ENCODE measurements at regions of chr2 and their contacts with region 1.

Region 1: GRCh38 chr2:71801969-71802368 is 345.7 kb downstream of the CYP26B1 start:
- DNase-seq: peak; percentile 30
- H3K4me3 ChIP-seq: no peak overlapping the region
- H3K27ac ChIP-seq: no peak overlapping the region
- H3K4me1 ChIP-seq: no peaks in the 10 kb centered on the region
- H3K27me3 ChIP-seq: no peaks in the 10 kb centered on the region
- CTCF ChIP-seq: peak in 4 of 5 experiments; percentile 24 to 42 (median 32)
- EP300 ChIP-seq: no peak
- POLR2A ChIP-seq: no peak

Region 2: DNA sequence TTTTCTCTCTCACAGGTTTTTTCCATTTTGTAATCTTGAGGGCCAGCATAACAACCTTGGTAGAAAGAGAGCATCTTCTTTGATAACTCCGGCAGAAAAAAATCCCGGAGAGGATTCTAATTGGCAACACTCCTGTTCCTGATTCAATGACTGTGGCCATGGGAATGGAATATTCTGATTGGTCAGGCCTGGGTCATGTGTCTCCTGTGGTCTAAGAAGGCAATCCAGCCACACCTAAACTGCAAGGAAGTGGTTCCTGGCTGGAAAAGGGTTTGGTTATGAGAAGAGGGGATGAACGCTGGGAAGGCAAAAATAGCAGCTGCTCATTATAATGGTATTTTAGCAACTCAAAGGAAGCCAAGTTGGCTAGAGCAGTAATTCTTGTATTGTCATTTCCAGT is 495.2 kb before region 1 on chr2:
- in situ Hi-C with region 1: no loop called
- intact Hi-C with region 1: no loop called
- DNase-seq: no peak
- H3K4me3 ChIP-seq: no peak overlapping the region
- H3K27ac ChIP-seq: no peak overlapping the region
- H3K4me1 ChIP-seq: no peaks in the 10 kb centered on the region
- H3K27me3 ChIP-seq: no peaks in the 10 kb centered on the region
- CTCF ChIP-seq: no peak
- EP300 ChIP-seq: no peak
- POLR2A ChIP-seq: no peak

Region 3: GRCh38 chr2:71317060-71317459 is 484.9 kb before region 1 on chr2:
- in situ Hi-C with region 1: no loop called
- intact Hi-C with region 1: no loop called
- DNase-seq: no peak
- H3K4me3 ChIP-seq: no peak overlapping the region
- H3K27ac ChIP-seq: no peak overlapping the region
- H3K4me1 ChIP-seq: no peaks in the 10 kb centered on the region
- H3K27me3 ChIP-seq: no peaks in the 10 kb centered on the region
- CTCF ChIP-seq: no peak
- EP300 ChIP-seq: no peak
- POLR2A ChIP-seq: no peak

Region 4: DNA sequence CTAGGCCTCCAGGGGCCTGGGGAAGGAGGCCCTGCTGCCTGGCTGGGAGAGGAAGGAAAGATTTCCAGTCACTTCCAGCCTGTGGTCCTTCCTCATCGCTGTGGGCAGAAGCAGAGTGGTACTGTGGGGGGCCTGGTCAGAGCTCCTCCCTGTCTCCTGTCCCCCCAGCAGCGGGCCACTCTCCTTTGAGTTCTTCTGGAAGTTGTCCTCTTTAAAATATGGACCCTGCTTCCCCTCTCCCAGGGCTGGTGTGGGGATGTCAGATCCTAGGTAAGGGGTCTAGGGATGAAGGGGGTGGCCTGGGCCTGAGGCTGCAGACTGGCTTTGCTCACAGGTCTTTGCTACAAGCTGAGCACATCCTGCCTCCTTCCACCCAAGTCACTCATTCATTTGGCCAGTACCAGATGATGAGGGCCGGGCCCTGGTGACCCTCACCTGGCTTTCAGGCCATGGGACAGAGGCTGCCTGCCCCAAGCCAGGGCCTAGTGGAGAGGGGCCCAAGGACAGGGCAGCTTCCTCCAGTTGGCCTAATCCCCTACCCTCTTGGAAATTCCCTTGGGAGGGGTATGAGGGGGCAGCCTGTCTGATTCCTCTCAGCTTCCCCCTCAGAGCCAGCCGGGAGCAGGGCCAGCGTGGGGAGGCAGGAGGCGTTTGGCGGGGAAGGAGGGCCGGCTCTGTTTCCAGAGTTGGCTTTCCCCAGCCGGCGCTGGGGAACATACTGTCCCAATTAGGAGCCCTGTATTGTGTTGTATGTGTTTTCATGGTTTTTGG is 116.7 kb before region 1 on chr2:
- in situ Hi-C with region 1: no loop called
- intact Hi-C with region 1: no loop called
- DNase-seq: no peak
- H3K4me3 ChIP-seq: no peak overlapping the region
- H3K27ac ChIP-seq: no peak overlapping the region
- H3K4me1 ChIP-seq: no peaks in the 10 kb centered on the region
- H3K27me3 ChIP-seq: no peaks in the 10 kb centered on the region
- CTCF ChIP-seq: no peak
- EP300 ChIP-seq: no peak
- POLR2A ChIP-seq: no peak

Region 5: DNA sequence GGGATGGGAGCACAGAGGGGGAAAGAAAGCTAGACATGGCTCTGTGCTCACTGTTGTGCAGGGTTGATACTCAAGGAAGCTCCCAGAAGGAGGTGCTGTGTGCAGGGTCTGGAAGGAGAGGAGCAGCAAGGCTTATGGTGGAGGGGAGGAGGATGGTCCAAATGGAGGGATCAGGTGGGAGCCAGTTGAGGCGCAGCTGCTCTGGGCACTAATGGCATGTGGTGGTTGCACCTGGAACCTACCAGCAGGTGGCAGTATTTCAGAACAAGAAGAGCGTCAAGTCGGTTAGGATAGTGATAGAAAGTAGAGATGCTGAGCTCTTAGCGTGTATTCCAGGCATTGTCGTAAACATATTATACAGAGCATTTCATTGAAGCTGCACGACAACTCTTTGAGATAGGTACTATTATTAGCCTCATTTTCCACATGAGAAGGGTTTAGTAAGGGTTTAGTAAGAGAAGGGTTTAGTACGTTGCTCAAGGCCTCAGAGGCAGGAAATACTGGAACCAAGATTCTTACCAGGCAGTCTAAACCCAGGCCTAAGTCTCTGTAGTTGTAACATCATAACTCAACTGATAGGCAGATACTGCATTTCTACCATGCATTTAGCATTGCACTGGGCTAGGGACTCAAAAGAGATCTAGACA is 122.0 kb after region 1 on chr2:
- in situ Hi-C with region 1: loop called in 1 of 4 experiments (anchors 25 kb)
- intact Hi-C with region 1: no loop called
- DNase-seq: peak; percentile 73
- H3K4me3 ChIP-seq: no peak overlapping the region
- H3K27ac ChIP-seq: no peak overlapping the region
- H3K4me1 ChIP-seq: peaks cover 10 to 15% (median 14%) of the 10 kb centered on the region in 4 donors
- H3K27me3 ChIP-seq: no peaks in the 10 kb centered on the region
- CTCF ChIP-seq: peak; percentile 74 to 88 (median 84)
- EP300 ChIP-seq: no peak
- POLR2A ChIP-seq: no peak

Region 6: GRCh38 chr2:72137498-72138010 is 335.6 kb after region 1 on chr2:
- in situ Hi-C with region 1: loop called in 1 of 4 experiments (anchors 25 kb)
- intact Hi-C with region 1: no loop called
- DNase-seq: peak; percentile 70
- H3K4me3 ChIP-seq: no peak overlapping the region
- H3K27ac ChIP-seq: no peak overlapping the region
- H3K4me1 ChIP-seq: peaks cover 13 to 19% (median 15%) of the 10 kb centered on the region in 4 donors
- H3K27me3 ChIP-seq: peaks cover 4% of the 10 kb centered on the region
- CTCF ChIP-seq: peak; percentile 81 to 95 (median 91)
- EP300 ChIP-seq: no peak
- POLR2A ChIP-seq: no peak

Measured in transverse colon (tissue), 4 donors.